ENCODE measurements at regions of chr2 and their contacts with region 1.

Region 1: GRCh38 chr2:88880441-88880953 is 189.0 kb downstream of the RPIA start:
- DNase-seq: peak; percentile 84
- H3K4me3 ChIP-seq: peak overlapping the region; percentile 60
- H3K27ac ChIP-seq: peak overlapping the region; percentile 100
- H3K4me1 ChIP-seq: peaks cover 47% of the 10 kb centered on the region
- CTCF ChIP-seq: peak; percentile 80

Region 2: DNA sequence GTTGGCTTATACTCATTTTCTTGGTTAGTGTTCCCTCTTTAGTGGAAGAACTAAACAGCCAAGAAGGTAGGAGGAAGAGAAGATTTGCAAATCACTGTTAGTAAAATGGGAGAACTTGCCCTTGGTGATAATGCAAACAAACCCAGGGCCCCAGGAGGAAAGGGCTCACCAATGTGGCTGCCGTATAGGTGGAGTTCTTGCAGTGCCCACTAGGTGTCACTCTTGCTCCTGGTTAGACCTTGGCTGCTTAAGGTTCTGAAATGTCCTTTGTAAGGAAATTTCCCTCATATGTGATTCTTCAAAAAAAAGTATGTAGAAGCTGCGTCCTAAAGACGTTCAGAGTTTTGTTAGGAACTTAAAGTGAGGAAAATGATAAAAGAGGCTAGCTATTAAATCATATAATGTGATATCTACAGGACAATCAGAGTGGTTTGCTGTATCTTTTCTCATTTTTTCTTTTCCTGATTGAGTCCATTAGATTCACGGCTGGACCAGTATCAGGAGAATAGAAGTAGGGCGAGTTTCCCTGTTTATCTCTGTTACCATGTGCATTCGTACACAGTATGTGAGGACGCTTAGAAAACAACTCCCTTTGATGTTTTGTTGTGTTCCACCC is 140.4 kb before region 1 on chr2:
- CTCF ChIA-PET with region 1: interaction called, 4 read pairs
- POLR2A ChIA-PET with region 1: interaction called, 5 read pairs
- intact Hi-C with region 1: loop called (anchors 1 kb)
- DNase-seq: peak; percentile 88
- H3K4me3 ChIP-seq: peak overlapping the region; percentile 18
- H3K27ac ChIP-seq: peak overlapping the region; percentile 69
- H3K4me1 ChIP-seq: peaks cover 22% of the 10 kb centered on the region
- CTCF ChIP-seq: peak; percentile 97

Region 3: GRCh38 chr2:88831792-88832248 is 48.7 kb before region 1 on chr2:
- CTCF ChIA-PET with region 1: interaction called, 43 read pairs
- POLR2A ChIA-PET with region 1: interaction called, 311 read pairs
- intact Hi-C with region 1: loop called (anchors 1 kb)
- DNase-seq: peak; percentile 98
- H3K4me3 ChIP-seq: peak overlapping the region; percentile 66
- H3K27ac ChIP-seq: peak overlapping the region; percentile 100
- H3K4me1 ChIP-seq: peaks cover 99% of the 10 kb centered on the region
- CTCF ChIP-seq: peak; percentile 98

Region 4: DNA sequence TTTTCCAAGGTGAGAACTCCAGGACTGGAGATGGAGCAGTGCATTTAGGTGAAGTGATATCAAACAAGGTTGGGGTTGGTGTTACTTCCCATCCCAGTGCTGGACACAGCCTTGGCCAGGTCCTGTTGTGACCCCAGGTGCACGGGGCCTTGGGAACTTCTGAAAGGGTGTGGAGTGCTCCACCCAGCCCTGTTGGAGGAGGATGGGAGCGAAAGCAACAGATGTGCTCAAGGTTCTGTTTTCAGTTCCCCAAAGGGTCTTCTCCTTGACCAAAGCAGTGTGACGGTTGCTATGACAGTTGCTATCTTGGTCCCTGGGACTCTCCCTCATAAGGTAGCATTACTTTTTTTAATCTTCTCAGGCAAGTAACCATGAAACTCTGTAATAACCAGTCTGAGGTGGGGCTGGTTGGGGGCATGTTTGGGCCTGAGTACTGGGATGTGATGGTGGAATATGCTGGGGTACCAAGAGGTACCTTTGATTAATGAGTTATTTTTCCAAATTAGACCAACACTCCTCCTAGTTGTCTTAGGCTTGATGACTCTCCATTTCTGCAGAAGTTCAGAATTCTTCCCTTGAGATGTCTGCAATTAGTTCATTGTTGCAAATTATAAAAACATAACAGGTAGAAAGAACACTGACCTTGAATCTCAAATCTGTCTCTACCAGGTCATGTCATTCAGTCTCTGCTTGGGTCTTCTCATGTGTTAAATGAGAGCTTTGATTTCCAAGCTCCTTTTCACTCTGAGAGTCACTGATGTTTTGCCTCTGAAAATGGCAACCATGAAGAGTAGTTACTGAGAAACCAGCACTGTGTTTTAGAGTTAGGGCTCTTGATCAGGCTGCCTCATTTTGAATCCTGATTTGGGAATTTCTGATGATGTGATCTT is 34.5 kb before region 1 on chr2:
- CTCF ChIA-PET with region 1: interaction called, 4 read pairs
- POLR2A ChIA-PET with region 1: interaction called, 311 read pairs
- intact Hi-C with region 1: no loop called
- DNase-seq: peak; percentile 99
- H3K4me3 ChIP-seq: peak overlapping the region; percentile 38
- H3K27ac ChIP-seq: peak overlapping the region; percentile 100
- H3K4me1 ChIP-seq: peaks cover 99% of the 10 kb centered on the region
- CTCF ChIP-seq: no peak

Region 5: DNA sequence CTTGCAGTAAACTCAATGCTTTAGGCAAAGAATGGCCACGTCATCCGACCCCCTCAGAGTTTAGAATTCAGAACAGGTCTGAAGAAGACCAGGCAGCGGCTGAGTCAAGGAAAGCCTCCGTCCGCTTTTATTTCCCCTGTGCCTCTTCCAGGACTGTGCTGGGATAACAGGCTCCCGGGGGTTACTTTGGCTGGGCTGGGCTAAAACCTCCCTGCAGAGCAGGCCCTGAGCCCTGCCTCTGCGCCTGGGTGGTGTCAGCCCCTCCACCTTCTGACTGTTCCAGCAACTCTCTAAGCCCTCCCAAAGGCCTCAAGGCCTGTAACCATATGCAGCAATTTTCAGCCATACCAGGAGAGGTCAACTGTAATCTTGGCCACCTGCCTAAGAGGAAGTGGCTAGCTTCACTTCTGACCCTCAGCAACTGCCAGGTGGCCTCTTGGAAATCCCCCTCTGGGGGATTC is 22.5 kb before region 1 on chr2:
- CTCF ChIA-PET with region 1: interaction called, 6 read pairs
- POLR2A ChIA-PET with region 1: interaction called, 232 read pairs
- intact Hi-C with region 1: no loop called
- DNase-seq: peak; percentile 95
- H3K4me3 ChIP-seq: peak overlapping the region; percentile 100
- H3K27ac ChIP-seq: peak overlapping the region; percentile 100
- H3K4me1 ChIP-seq: peaks cover 54% of the 10 kb centered on the region
- CTCF ChIP-seq: no peak